ENCODE measurements at regions of chr20 and their contacts with region 1.

Region 1: DNA sequence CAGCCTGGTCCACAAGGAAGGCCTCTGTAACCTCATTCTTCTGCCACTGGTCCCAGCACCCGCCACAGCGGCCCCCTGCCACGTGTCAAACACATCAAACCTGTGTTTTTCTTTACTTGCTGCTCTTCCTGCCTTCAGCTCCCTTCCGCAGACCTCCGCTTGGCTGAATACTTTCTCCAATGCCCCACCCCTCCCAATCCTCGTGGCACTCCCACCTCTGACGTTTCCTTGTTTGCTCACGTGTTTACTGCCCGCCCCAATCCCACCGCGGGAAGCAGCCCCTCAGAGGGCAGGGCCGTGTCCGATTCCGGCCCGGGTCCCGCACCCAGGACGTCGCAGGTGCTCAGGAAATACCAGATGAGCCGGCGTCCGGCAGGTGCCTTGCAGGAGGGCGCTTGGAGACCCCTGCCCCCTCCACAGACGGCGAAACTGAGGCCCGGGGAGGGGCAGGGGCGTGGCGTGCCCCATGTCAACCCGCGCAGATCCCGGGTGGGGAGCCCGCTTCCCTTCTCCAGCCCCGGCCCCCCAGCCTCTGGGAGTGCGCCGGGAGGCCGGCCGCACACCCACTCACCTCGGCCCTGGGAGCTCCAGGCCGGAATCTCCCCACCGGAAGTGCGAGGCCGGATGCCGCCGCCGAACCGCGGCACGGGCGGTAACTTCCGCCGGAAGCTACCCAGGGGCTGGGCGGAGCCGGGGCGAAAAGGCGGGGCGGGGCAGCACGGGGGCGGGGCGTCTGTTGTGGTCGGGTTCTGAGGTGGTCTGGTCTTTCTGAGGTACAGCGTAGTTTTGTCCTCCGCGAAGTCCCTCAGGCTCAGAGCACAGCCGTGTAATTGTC is 42.4 kb downstream of the ELMO2 start:
- DNase-seq: peak; percentile 84
- H3K4me3 Mint-ChIP-seq: peak overlapping the region; percentile 88
- H3K27ac Mint-ChIP-seq: peak overlapping the region; percentile 87
- H3K4me1 Mint-ChIP-seq: peaks cover 50% of the 10 kb centered on the region
- H3K27me3 Mint-ChIP-seq: no peaks in the 10 kb centered on the region

Region 2: GRCh38 chr20:46400828-46401477 is 36.9 kb after region 1 on chr20:
- intact Hi-C with region 1: loop called (anchors 1 kb)
- DNase-seq: peak; percentile 29
- H3K4me3 Mint-ChIP-seq: peak overlapping the region; percentile 73
- H3K27ac Mint-ChIP-seq: peak overlapping the region; percentile 84
- H3K4me1 Mint-ChIP-seq: peaks cover 56% of the 10 kb centered on the region
- H3K27me3 Mint-ChIP-seq: no peaks in the 10 kb centered on the region

Region 3: GRCh38 chr20:46406199-46406985 is 42.4 kb after region 1 on chr20 and contains the start of gene ELMO2:
- intact Hi-C with region 1: loop called (anchors 1 kb)
- DNase-seq: peak; percentile 93
- H3K4me3 Mint-ChIP-seq: peak within 1 kb of the TSS; percentile 83
- H3K27ac Mint-ChIP-seq: peak within 1 kb of the TSS; percentile 86
- H3K4me1 Mint-ChIP-seq: peaks cover 64% of the 10 kb centered on the region
- H3K27me3 Mint-ChIP-seq: peaks cover 5% of the 10 kb centered on the region
- total RNA-seq, gene ELMO2: 59.1 and 63.2 TPM in 2 replicates

Region 4: DNA sequence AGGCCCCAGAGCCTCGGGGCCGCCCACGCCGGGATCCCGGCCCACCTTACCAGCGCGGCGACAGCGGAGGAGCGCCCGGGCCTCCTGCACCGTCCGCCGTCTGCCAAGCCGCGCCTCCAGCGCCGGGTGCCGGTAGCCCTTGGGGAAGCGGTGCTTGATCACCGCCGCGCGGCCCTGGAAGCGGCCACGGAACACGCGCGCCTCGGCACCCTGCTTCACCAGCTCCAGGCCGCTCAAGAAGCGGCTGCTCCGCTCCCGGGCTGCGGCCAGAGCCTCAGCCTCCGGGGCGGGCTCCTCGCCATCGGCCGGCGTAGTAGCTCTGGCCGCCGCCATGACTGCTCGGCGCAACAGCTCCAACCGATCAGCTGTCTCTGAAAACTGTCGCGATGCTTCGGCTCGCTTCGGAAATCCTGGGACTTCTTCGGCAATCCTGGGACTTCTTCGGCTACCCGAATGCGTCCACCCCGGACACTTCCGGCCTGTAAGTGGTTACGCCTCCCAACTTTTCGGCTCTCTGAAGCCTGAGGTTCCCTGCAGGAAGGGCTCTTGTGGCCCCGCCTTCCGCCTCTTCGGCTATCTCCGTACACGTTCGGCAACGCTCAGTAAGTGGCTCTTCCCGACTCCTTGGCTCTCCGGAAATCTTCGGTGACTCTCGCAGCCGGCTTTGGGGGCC is 325.2 kb after region 1 on chr20 and contains the start of gene TP53RK:
- intact Hi-C with region 1: loop called (anchors 5 kb)
- DNase-seq: peak; percentile 95
- H3K4me3 Mint-ChIP-seq: peak within 1 kb of the TSS; percentile 88
- H3K27ac Mint-ChIP-seq: peak within 1 kb of the TSS; percentile 83
- H3K4me1 Mint-ChIP-seq: peaks cover 33% of the 10 kb centered on the region
- H3K27me3 Mint-ChIP-seq: no peaks in the 10 kb centered on the region
- total RNA-seq, gene TP53RK: 14.4 and 14.7 TPM in 2 replicates

Measured in activated T-helper 2 cell treated with anti-CD3 and anti-CD28 coated beads, Interferon-gamma antibody, Interleukin-2, Interleukin-4, amounts not matched to agents 10 μg/mL and 5 μg/mL and 100 μg/mL, durations not matched to agents 14 hours and 24 hours and 36 hours (primary cell).